ENCODE measurements at regions of chr11 and their contacts with region 1.

Region 1: DNA sequence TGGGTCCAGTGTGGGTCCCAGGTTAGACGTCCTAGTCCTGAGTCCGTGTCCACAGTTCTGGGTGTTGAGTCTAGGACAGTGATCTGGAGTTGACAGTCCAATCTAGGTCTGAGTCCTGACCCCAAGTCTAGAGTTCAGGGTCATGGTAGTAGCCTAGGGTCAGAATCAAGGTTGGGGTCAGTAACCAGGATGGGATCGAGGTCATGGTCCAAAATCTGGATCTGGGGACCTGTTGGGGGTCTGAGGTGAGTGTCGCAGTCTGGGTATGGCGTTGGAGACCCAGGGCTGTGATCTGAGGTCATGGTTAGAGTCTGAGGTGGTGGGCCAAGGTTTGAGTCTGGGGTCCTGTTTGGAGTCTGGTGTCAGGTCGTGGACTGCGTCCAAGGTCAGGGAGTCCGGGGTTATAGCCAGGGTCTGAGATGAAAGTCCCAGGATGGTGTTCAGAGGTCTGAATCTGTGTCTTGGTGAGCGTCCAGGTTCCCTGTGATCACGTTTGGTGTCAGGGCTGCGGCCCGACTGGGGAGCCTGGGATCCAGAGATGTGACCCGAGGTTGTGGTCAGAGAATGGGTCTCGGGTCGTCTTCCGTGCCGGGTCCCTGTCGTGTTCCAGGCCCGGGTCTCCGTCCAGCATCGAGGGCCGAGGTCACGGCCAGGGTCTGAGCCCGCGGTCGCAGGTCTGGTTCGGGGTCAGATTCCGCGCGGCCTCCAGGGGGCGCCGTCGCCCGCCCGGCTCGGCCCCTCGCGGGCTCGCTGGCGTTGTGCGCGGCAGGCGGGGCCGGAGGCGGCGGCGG is 445 bp upstream of the GRK2 start:
- DNase-seq: peak; percentile 84 to 89
- ATAC-seq: peak; percentile 46 to 75 (median 57)
- H3K4me3 ChIP-seq: no peak overlapping the region
- H3K4me3 Mint-ChIP-seq: peak overlapping the region; percentile 85
- H3K27ac ChIP-seq: peak overlapping the region; percentile 75
- H3K27ac Mint-ChIP-seq: peak overlapping the region; percentile 87 to 97
- H3K4me1 ChIP-seq: peaks cover 74% of the 10 kb centered on the region
- H3K4me1 Mint-ChIP-seq: peaks cover 57 to 76% of the 10 kb centered on the region in 2 donors
- H3K27me3 ChIP-seq: no peaks in the 10 kb centered on the region
- H3K27me3 Mint-ChIP-seq: peaks cover 0 to 3% of the 10 kb centered on the region in 2 donors
- CTCF ChIP-seq: peak; percentile 59

Region 2: GRCh38 chr11:67277231-67277961 is 11.6 kb after region 1 on chr11:
- intact Hi-C with region 1: loop called (anchors 1 kb)
- DNase-seq: peak; percentile 84 to 97
- ATAC-seq: peak; percentile 90 to 95 (median 91)
- H3K4me3 ChIP-seq: peak overlapping the region; percentile 37
- H3K4me3 Mint-ChIP-seq: peak overlapping the region; percentile 80
- H3K27ac ChIP-seq: peak overlapping the region; percentile 95
- H3K27ac Mint-ChIP-seq: peak overlapping the region; percentile 96 to 97
- H3K4me1 ChIP-seq: peaks cover 100% of the 10 kb centered on the region
- H3K4me1 Mint-ChIP-seq: peaks cover 58 to 65% of the 10 kb centered on the region in 2 donors
- H3K27me3 ChIP-seq: no peaks in the 10 kb centered on the region
- H3K27me3 Mint-ChIP-seq: no peaks in the 10 kb centered on the region
- CTCF ChIP-seq: no peak

Region 3: GRCh38 chr11:67317205-67317887 is 51.5 kb after region 1 on chr11:
- intact Hi-C with region 1: loop called (anchors 1 kb)
- DNase-seq: peak; percentile 98 to 99
- ATAC-seq: peak; percentile 88 to 94 (median 90)
- H3K4me3 ChIP-seq: peak overlapping the region; percentile 61
- H3K4me3 Mint-ChIP-seq: peak overlapping the region; percentile 100
- H3K27ac ChIP-seq: peak overlapping the region; percentile 68
- H3K27ac Mint-ChIP-seq: peak overlapping the region; percentile 94 to 97
- H3K4me1 ChIP-seq: peaks cover 32% of the 10 kb centered on the region
- H3K4me1 Mint-ChIP-seq: peaks cover 25 to 33% of the 10 kb centered on the region in 2 donors
- H3K27me3 ChIP-seq: no peaks in the 10 kb centered on the region
- H3K27me3 Mint-ChIP-seq: peaks cover 0 to 11% of the 10 kb centered on the region in 2 donors
- CTCF ChIP-seq: peak; percentile 78

Region 4: GRCh38 chr11:67382276-67383136 is 116.7 kb after region 1 on chr11:
- intact Hi-C with region 1: loop called (anchors 1 kb)
- DNase-seq: peak; percentile 81 to 92
- ATAC-seq: peak; percentile 92 to 99 (median 97)
- H3K4me3 ChIP-seq: no peak overlapping the region
- H3K4me3 Mint-ChIP-seq: no peak overlapping the region
- H3K27ac ChIP-seq: no peak overlapping the region
- H3K27ac Mint-ChIP-seq: peak overlapping the region; percentile 25 to 36
- H3K4me1 ChIP-seq: peaks cover 24% of the 10 kb centered on the region
- H3K4me1 Mint-ChIP-seq: peaks cover 17 to 24% of the 10 kb centered on the region in 2 donors
- H3K27me3 ChIP-seq: no peaks in the 10 kb centered on the region
- H3K27me3 Mint-ChIP-seq: peaks cover 7 to 8% of the 10 kb centered on the region in 2 donors
- CTCF ChIP-seq: peak; percentile 93

Measured in natural killer cell (primary cell).